Activated naive CD4-positive, alpha-beta T cell treated with anti-CD3 and anti-CD28 coated beads, Interleukin-2, amount 10 ng/mL, durations not matched to agents 7 days and 5 days (primary cell): ENCODE measurements at regions of chr5 and their contacts with region 1.

Region 1: GRCh38 chr5:40736103-40736875 is 19.5 kb downstream of the TTC33 start:
- DNase-seq: no peak
- H3K4me3 Mint-ChIP-seq: no peak overlapping the region
- H3K27ac Mint-ChIP-seq: no peak overlapping the region
- H3K4me1 Mint-ChIP-seq: peaks cover 17% of the 10 kb centered on the region
- H3K27me3 Mint-ChIP-seq: no peaks in the 10 kb centered on the region

Region 2: DNA sequence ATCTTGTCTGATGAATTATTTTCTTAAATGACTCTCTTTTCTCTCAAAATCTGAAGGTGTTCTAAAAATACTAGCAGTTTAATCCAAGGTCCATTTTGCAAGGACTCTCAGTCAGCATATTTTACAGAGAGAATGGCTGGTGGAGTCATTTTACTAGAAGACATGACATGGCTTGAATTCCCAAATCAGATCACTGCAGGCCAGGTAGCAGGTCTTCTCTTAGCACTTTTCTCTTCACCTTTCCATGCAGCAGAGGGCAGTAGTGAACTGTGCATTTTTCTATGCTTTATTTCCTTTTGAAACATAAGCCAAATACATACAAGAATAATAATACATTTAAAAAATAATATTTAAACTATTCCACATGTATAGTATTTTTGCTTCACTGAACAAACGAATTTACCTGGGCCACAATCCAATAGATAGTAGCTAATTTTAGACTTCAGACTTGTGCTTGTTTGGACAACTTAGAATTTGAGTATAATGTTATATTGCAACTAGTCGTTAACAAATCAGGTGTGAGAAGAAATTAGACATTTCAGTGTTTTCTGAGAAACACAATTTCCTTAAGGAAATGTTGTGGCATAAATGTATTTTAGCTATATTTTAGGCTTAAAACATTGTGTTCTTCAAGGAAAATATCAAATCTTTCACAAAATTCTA is 1022.1 kb before region 1 on chr5:
- CTCF ChIA-PET with region 1: interaction called, 13 read pairs
- DNase-seq: peak; percentile 53
- H3K4me3 Mint-ChIP-seq: no peak overlapping the region
- H3K27ac Mint-ChIP-seq: no peak overlapping the region
- H3K4me1 Mint-ChIP-seq: no peaks in the 10 kb centered on the region
- H3K27me3 Mint-ChIP-seq: no peaks in the 10 kb centered on the region

Region 3: GRCh38 chr5:39948867-39949468 is 787.3 kb before region 1 on chr5:
- CTCF ChIA-PET with region 1: interaction called, 13 read pairs
- DNase-seq: peak; percentile 71
- H3K4me3 Mint-ChIP-seq: no peak overlapping the region
- H3K27ac Mint-ChIP-seq: no peak overlapping the region
- H3K4me1 Mint-ChIP-seq: peaks cover 2% of the 10 kb centered on the region
- H3K27me3 Mint-ChIP-seq: no peaks in the 10 kb centered on the region

Region 4: DNA sequence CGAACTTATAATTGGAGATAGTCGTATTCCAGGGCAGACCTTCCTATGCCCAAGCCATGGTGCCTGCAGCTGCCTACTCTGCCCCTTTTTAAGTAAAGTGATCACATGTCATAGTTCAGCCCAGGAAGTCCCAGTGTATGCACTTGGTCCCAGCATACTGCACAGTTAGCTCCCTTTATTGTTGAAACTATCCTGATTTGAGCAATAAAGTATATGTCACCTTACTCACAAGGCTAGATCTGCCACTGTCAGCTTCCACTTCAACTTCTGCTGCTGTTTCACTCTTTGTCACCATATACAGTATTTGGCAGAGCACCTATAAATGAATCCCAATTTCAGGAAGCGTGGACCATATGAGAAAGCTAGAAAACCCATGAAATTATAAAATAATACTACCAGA is 160.4 kb before region 1 on chr5:
- CTCF ChIA-PET with region 1: no interaction called
- DNase-seq: no peak
- H3K4me3 Mint-ChIP-seq: no peak overlapping the region
- H3K27ac Mint-ChIP-seq: no peak overlapping the region
- H3K4me1 Mint-ChIP-seq: peaks cover 28% of the 10 kb centered on the region
- H3K27me3 Mint-ChIP-seq: no peaks in the 10 kb centered on the region

Region 5: DNA sequence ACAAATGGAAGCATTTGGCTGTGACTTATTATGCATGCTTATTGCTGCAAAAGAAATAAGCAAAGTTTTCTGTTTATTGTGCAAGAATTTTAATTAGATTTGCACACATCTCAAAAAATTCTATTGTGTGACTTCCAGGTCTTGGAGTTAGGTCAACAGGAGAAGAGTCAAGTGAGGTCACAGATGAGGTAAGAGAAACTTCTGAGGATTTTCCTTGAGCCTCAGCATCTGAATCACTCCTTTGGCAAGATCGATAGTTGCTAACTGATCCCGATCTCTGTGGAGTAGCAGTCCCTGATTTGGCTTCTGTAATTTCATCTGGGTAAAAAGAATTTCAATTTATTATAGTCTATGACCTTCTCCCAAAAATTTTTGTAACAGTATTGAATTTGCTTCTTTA is 26.4 kb after region 1 on chr5:
- CTCF ChIA-PET with region 1: no interaction called
- DNase-seq: no peak
- H3K4me3 Mint-ChIP-seq: no peak overlapping the region
- H3K27ac Mint-ChIP-seq: no peak overlapping the region
- H3K4me1 Mint-ChIP-seq: no peaks in the 10 kb centered on the region
- H3K27me3 Mint-ChIP-seq: no peaks in the 10 kb centered on the region